Dorsolateral prefrontal cortex (tissue), 120 donors: ENCODE measurements at regions of chrX and their contacts with region 1.

Region 1: GRCh38 chrX:87517571-87518141 is at the start of gene KLHL4:
- DNase-seq: peak in 5 of 10 donors; percentile 16 to 51 (median 45)
- H3K4me3 ChIP-seq: peak within 1 kb of the TSS; percentile 17 to 73 (median 53)
- H3K27ac ChIP-seq: peak within 1 kb of the TSS; percentile 14 to 93 (median 82)
- H3K27me3 ChIP-seq: peaks cover 0 to 66% (median 13%) of the 10 kb centered on the region in 45 donors
- CTCF ChIP-seq: no peak
- total RNA-seq, gene KLHL4: 5.7 to 46.1 (median 16.2) TPM

Region 2: DNA sequence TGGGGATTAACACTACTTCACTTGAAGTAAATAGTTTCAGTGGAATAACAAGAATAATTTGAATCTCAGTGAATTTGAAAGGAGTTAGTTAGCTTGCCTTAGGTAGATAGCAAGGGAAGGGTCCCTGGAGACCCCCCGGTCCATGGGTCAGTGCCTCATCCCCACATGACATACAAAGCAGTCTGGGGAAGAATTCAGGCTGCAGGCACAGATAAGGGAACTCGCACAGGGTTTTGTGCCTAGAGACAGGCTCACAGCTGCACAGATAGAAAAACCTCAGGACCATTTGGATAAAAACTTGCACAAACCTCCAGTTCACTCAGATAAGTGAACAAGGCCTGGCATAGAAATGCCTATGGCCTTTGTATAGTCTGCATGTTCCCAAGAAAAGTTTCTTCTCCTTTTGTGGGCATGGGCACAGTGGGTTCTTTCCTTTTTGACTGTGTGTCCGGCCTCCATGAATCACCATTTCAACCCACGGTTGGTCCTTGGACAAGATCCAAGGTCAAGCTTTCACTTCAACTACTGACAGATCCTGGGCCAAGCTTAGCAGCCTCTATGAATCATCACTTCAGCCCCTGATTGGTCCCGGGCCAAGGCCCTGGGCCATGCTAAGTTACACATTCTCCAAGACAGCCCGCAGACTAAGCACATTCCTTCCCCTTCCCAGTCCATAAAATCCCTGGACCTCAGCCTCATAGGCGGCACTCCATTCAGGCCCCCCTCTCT is 108.4 kb before region 1 on chrX:
- intact Hi-C with region 1: no loop called
- DNase-seq: peak in 4 of 10 donors; percentile 7 to 47 (median 27)
- H3K4me3 ChIP-seq: no peak overlapping the region
- H3K27ac ChIP-seq: no peak overlapping the region
- H3K27me3 ChIP-seq: peaks cover 0 to 40% (median 4%) of the 10 kb centered on the region in 45 donors
- CTCF ChIP-seq: no peak

Region 3: DNA sequence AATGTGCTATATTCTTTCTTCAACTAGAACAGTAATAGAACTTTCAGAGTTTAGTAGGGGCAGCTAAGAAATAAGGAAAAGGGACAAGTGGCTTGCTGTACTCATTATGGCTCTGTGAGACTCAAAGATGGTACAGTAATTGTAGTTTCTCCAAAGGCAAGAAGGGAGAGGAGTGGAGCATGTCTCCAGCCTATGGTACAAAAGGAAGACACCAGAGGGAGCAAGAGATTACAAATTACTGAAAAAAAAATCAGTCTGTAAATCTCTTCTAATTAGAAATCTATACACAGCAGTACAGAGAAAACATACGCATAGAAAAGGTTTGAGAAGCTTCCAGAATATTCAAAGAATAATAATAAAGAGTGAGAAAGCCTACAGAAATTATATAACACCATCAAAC is 61.3 kb after region 1 on chrX:
- intact Hi-C with region 1: loop called in 1 of 2 experiments (anchors 2 kb)
- DNase-seq: no peak
- H3K4me3 ChIP-seq: no peak overlapping the region
- H3K27ac ChIP-seq: peak overlapping the region in 5 of 59 donors; percentile 11 to 36 (median 13)
- H3K27me3 ChIP-seq: peaks cover 0 to 72% (median 14%) of the 10 kb centered on the region in 45 donors
- CTCF ChIP-seq: peak in 31 of 56 donors; percentile 10 to 63 (median 24)